ENCODE measurements at regions of chr6 and their contacts with region 1.

Region 1: GRCh38 chr6:41787219-41787917 is at the start of gene TOMM6:
- DNase-seq: peak; percentile 97
- ATAC-seq: peak; percentile 86
- total RNA-seq, gene TOMM6: 226 TPM

Region 2: GRCh38 chr6:41675176-41675770 is 112.1 kb before region 1 on chr6:
- intact Hi-C with region 1: no loop called
- DNase-seq: no peak
- ATAC-seq: no peak

Region 3: DNA sequence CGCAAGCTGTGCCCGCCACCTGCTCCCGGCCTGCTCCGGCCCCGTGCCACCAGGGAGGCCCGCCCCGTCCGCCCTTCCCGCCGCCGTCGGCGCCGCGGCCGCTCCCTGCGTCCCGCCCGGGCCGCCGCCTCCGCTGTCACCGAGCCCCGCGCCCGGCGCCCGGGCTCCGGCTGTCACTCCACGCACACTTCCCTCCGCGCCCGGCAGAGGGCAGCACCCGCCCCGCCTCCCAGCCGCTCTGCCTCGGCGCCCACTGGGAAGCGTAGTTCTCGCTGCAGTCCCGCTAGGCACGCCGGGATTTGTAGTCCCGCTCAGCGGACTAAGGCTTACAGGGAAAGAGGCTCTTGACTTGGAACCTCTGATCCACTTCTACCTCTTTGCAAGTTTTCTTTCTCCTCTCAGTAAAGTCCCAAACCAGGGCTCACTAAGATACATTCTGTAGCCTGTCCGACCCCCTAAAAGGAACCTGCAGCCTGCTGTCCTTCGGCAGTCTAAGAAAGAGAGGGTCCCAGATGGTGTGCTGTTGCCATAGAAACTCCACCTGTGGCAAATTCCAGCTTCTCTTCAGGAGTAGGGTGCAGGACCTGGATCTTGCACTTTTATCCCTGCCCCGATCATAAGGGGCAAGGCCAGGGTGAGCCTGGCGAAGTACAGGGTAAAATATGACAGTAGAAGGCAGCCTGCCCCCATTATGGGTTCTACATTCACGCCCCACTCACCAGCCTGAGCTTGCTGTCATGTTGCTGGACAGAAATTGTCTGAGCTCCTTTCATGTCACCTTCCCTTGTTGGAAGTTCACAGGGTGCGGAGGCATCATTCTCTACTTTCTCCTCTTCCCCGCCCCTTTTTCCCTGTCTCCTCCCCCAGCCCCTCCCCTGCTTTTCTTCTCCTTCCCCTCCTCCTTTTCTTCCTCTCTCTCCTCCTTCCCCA is 51.7 kb before region 1 on chr6 and contains the start of gene TFEB:
- intact Hi-C with region 1: loop called (anchors 2 kb)
- DNase-seq: peak; percentile 98
- ATAC-seq: peak; percentile 70
- total RNA-seq, gene TFEB: 39.5 TPM

Region 4: GRCh38 chr6:41756354-41756753 is 31.0 kb before region 1 on chr6:
- intact Hi-C with region 1: no loop called
- DNase-seq: no peak
- ATAC-seq: no peak

Region 5: GRCh38 chr6:41801380-41801779 is 14.0 kb after region 1 on chr6:
- intact Hi-C with region 1: no loop called
- DNase-seq: no peak
- ATAC-seq: no peak

Region 6: DNA sequence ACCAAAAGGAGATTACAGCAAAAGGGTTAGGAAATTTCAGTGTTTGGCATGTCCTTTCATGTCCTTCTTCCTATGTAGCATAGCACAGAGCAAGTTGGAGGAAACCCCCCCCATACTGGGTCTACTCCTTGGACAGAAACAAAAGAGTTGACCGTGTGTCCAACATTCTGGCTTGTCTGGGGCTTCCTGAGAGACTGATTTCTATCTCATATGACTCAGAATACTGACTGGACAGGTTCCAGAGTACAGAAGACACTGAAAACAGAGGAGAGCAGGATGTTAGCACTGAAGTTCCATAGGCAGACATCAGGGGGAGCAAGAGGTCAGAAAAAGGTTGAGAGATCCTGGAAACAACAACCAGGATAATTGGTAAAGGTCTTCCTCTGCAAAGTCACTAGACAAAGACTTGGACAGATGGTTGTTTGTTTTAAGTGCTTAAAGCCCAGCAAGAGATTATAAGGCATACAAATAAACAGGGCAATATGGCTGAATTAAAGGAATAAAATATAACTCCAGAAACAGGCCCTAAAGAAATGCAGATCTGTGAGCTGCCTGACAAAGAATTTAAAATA is 59.4 kb after region 1 on chr6:
- intact Hi-C with region 1: loop called (anchors 2 kb)
- DNase-seq: no peak
- ATAC-seq: peak; percentile 85

Region 7: DNA sequence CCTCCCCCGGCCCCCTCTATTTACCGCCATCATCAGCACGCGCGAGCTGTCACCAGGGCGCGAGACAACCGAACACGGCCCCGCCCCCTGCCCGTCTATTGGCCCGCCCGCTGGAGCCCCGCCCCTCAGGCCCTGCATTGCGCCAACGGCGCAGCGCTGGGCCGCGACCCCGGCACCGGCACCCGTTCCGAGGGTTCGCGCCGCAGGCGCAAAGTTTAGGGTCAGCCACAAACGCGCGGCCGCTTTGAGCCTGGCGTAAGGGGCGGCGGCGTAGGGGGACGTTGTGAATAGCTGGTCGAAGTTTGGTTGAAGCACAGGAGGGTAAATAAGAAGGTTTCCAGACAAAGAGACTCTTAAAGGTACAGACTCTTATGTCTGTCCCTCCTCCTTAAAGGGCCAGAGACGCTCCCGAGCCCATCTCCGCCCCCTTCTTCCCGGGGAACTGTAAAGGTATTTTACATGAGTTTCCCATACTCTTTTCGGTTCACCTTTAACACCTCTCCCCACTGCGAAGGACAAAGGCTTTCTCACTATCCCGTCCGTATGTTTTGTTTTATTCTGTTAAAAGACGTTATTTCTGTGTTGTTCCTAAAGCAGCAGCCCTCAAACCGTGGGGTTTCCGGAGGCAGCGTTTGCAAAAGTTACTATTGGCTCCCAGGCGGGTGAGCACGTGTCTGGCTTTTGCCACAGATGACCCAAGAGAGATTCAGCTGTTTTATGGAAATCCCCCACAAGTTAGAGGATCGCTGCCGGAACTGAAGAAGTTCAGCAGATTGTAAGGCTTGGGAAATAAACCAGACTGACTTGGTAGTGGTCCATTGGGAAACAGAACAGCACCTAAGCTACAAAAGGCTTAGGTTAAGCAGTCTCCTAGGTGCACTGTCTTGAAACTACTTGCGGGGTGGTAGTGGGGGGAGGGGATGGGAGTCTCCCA is 108.2 kb after region 1 on chr6 and contains the start of gene USP49:
- intact Hi-C with region 1: loop called (anchors 5 kb)
- DNase-seq: peak; percentile 96
- ATAC-seq: peak; percentile 99
- total RNA-seq, gene USP49: 2.0 TPM

Region 8: DNA sequence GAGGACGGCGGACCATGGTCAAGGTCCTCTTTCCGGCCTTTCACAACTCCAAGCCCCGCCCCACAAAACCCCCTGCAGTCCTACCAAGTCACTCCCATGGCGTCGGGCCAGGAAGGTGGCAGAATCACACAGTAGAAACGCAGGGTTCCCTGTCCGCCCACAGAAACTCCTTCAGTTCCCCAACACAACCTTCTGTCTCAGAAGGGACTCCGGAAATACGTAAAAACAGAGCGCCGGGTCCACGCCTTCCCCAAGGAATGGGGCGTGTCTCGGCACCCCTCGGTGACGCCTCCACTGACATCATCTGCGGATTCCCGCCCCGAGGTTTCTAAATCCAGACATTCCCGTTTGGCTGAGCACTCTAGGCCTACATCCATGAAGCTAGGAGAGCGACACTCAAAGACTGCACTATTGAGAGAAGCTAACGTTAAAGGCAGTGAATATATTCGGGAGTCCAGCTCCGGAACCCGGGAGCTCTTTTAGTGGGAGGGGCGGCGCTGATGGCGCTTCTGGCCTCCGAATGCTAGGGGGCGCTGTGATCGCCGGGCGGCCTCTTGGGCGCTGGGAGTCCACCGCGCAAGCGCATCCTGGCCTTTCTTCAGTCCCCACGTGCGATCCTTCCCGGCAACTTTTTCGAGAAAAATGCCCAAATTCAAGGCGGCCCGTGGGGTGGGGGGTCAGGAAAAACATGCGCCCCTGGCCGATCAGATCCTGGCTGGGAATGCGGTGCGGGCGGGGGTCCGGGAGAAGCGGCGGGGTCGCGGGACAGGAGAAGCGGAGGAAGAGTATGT is 133.7 kb after region 1 on chr6 and contains the starts of genes BYSL and MED20:
- intact Hi-C with region 1: loop called (anchors 1 kb)
- DNase-seq: peak; percentile 96
- ATAC-seq: peak; percentile 96
- total RNA-seq, gene BYSL: 9.6 TPM
- total RNA-seq, gene MED20: 22.9 TPM

Region 9: GRCh38 chr6:42217519-42218367 is 430.4 kb after region 1 on chr6 and contains the start of gene MRPS10:
- intact Hi-C with region 1: loop called (anchors 5 kb)
- DNase-seq: peak; percentile 94
- ATAC-seq: peak; percentile 99
- total RNA-seq, gene MRPS10: 62.3 TPM

Region 10: DNA sequence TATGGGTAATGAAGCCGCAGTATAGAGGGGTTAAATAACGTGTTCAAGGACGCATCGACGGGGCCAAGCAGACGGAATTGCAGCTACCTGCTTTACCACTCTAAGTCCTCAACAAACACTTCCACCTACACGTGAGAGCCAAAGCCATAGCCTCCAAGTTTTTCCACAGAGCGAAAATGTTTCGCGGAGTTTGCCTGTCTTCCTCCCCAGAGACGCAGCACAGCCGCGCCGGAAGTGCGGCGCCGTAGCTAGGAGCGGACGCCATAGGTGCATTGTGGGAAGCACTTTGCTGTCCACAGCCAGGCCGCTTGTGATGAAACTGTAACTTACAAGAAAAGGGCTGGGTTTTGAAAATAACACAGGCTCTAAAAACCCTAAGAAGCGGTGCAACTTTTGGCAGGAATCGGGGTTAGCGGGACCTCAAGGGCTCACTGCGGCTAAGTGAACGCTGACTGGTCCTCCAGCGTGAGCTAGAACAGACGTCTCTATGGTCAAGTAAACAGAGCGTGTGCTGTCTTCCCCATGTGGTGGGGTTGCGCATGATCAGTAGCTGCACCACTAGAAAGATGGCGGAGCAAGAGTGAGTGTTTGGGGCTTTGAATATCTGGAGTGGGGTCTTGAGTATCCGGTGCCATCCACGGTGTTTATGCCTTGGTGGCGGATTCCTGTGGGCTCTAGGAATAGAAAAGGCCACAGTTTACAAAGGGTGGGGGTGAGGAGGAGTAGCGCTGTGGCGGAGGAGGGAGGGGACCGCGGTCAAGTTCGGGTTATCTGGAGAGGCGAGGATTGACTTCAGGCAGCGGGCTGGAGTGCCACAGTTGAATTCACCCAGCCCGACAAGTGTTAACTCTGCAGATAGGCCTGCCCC is 1092.2 kb after region 1 on chr6 and contains the start of gene RPL7L1:
- intact Hi-C with region 1: loop called (anchors 10 kb)
- DNase-seq: peak; percentile 93
- ATAC-seq: peak; percentile 98
- total RNA-seq, gene RPL7L1: 44.5 TPM

Measured in Right ventricle myocardium inferior (tissue), 1 donor.